ENCODE measurements at regions of chr1 and their contacts with region 1.

Region 1: GRCh38 chr1:204806943-204807687 is 63.5 kb upstream of the NFASC start:
- DNase-seq: peak; percentile 97
- H3K27ac ChIP-seq: no peak overlapping the region
- CTCF ChIP-seq: peak; percentile 98

Region 2: GRCh38 chr1:204506961-204507387 is 300.1 kb before region 1 on chr1:
- CTCF ChIA-PET with region 1: interaction called, 28 read pairs
- POLR2A ChIA-PET with region 1: no interaction called
- DNase-seq: peak; percentile 74
- H3K27ac ChIP-seq: peak overlapping the region; percentile 91
- CTCF ChIP-seq: no peak

Region 3: GRCh38 chr1:204623894-204624361 is 183.2 kb before region 1 on chr1:
- CTCF ChIA-PET with region 1: interaction called, 16 read pairs
- POLR2A ChIA-PET with region 1: interaction called, 3 read pairs
- DNase-seq: no peak
- H3K27ac ChIP-seq: no peak overlapping the region
- CTCF ChIP-seq: no peak

Region 4: DNA sequence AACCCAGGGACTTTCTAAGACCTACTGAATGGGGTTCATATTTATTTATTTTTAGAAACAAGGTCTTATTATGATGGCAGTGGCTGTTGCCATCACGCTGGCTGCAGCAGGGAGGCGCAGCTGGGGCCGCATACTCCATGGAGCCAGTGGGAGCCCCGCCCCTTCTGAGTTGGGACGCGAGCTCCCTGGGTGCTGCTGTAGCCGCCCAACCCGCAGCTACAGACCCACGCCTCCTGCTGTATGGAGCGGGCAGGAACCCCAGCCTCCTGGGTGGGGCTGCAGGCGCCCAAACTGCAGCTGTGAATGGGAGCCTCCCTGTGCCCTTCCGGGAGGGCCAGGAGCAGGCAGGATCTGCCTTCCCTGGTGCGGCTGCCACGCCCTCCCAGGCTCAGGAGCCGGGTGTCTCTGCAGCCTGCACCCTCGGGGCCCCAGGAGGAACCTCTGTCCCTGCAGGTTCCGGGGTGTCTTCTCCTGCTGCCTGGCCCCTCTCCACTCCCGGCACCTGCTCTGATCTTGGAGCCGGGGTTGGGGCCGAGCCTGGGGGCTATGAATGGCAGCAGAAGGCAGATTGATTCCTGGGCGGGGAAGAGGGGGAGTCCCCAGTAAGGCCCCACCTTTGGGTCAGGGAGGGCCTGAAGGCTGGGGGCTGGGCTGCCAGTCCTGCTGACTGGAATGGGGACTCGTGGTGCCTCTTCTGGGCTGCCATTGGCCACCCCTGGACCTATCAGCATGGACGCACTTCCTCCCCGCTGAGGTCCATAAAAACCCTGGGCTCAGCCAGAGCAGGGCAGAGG is 55.0 kb before region 1 on chr1:
- CTCF ChIA-PET with region 1: interaction called, 16 read pairs
- POLR2A ChIA-PET with region 1: no interaction called
- DNase-seq: peak; percentile 33
- H3K27ac ChIP-seq: no peak overlapping the region
- CTCF ChIP-seq: no peak

Region 5: GRCh38 chr1:204819495-204819894 is 12.4 kb after region 1 on chr1:
- CTCF ChIA-PET with region 1: interaction called, 43 read pairs
- POLR2A ChIA-PET with region 1: no interaction called
- DNase-seq: no peak
- H3K27ac ChIP-seq: no peak overlapping the region
- CTCF ChIP-seq: no peak

Region 6: GRCh38 chr1:205061665-205062069 is 254.6 kb after region 1 on chr1:
- CTCF ChIA-PET with region 1: interaction called, 24 read pairs
- POLR2A ChIA-PET with region 1: no interaction called
- DNase-seq: peak; percentile 81
- H3K27ac ChIP-seq: no peak overlapping the region
- CTCF ChIP-seq: peak; percentile 89

Region 7: DNA sequence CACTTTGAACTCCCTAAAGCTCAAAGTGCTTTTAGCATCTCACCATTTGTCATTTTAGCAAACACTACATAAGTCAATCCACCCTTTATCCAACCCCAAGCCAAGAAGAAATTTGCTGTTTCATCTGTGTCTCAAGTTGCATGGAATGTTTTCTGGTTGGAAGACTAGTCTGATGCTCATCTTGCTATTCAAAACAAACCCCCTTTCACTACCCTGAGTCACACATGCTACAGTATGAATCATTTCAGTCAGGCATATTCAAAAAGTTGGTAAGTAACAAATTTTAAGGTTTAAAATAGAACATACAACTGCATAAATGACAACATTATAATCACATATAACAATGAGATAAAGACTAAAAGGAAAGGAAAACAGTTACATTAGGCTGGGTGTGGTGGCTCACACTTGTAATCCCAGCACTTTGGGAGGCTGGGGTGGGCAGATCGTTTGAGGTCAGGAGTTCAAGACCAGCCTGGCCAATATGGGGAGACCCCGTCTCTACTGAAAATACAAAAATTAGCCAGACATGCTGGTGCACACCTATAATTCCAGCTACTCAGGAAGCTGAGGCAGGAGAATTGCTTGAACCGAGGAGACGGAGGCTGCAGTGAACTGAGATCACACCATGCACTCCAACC is 365.7 kb after region 1 on chr1:
- CTCF ChIA-PET with region 1: no interaction called
- POLR2A ChIA-PET with region 1: no interaction called
- DNase-seq: peak; percentile 95
- H3K27ac ChIP-seq: peak overlapping the region; percentile 69
- CTCF ChIP-seq: no peak